Dorsolateral prefrontal cortex (tissue), 120 donors: ENCODE measurements at regions of chrX and their contacts with region 1.

Region 1: GRCh38 chrX:30568136-30568535 is 9.4 kb downstream of the TASL start:
- DNase-seq: no peak
- H3K4me3 ChIP-seq: no peak overlapping the region
- H3K27ac ChIP-seq: no peak overlapping the region
- H3K27me3 ChIP-seq: peaks cover 0 to 56% (median 9%) of the 10 kb centered on the region in 45 donors
- CTCF ChIP-seq: no peak

Region 2: DNA sequence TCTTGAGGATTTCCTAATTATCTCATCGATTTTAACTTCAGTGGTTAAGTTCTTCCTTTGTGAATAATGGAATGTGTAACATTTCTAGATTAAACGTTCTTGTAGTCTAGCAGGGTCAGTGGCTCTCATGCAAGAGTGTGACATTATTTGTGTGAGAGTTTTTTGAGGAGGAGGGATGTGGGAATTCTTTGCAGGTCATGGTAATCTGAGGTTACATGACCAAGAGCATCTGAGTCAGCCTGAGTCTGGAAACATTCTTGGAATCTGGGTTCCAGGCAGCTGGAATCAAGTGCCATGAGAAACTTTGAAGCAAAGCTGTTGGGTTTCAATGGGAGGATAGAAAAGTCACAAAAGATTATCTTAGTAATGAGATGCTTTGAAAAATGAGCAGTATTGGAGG is 134.6 kb after region 1 on chrX:
- intact Hi-C with region 1: loop called in 1 of 2 experiments (anchors 10 kb)
- DNase-seq: no peak
- H3K4me3 ChIP-seq: no peak overlapping the region
- H3K27ac ChIP-seq: no peak overlapping the region
- H3K27me3 ChIP-seq: peaks cover 0 to 41% (median 4%) of the 10 kb centered on the region in 45 donors
- CTCF ChIP-seq: no peak

Region 3: GRCh38 chrX:30713061-30713525 is 145.0 kb after region 1 on chrX:
- intact Hi-C with region 1: loop called (anchors 5 to 10 kb)
- DNase-seq: peak in 4 of 10 donors; percentile 14 to 48 (median 43)
- H3K4me3 ChIP-seq: no peak overlapping the region
- H3K27ac ChIP-seq: no peak overlapping the region
- H3K27me3 ChIP-seq: peaks cover 0 to 55% (median 12%) of the 10 kb centered on the region in 45 donors
- CTCF ChIP-seq: peak in 53 of 56 donors; percentile 21 to 78 (median 52)